Activated CD8-positive, alpha-beta T cell treated with anti-CD3 and anti-CD28 coated beads for 36 hours (primary cell): ENCODE measurements at regions of chr9 and their contacts with region 1.

Region 1: GRCh38 chr9:112898872-112899311 is 8.2 kb upstream of the SLC46A2 start:
- DNase-seq: no peak
- ATAC-seq: no peak
- H3K4me3 Mint-ChIP-seq: no peak overlapping the region
- H3K27ac Mint-ChIP-seq: no peak overlapping the region
- H3K4me1 Mint-ChIP-seq: peaks cover 9% of the 10 kb centered on the region
- H3K27me3 Mint-ChIP-seq: peaks cover 37% of the 10 kb centered on the region
- CTCF ChIP-seq: no peak

Region 2: DNA sequence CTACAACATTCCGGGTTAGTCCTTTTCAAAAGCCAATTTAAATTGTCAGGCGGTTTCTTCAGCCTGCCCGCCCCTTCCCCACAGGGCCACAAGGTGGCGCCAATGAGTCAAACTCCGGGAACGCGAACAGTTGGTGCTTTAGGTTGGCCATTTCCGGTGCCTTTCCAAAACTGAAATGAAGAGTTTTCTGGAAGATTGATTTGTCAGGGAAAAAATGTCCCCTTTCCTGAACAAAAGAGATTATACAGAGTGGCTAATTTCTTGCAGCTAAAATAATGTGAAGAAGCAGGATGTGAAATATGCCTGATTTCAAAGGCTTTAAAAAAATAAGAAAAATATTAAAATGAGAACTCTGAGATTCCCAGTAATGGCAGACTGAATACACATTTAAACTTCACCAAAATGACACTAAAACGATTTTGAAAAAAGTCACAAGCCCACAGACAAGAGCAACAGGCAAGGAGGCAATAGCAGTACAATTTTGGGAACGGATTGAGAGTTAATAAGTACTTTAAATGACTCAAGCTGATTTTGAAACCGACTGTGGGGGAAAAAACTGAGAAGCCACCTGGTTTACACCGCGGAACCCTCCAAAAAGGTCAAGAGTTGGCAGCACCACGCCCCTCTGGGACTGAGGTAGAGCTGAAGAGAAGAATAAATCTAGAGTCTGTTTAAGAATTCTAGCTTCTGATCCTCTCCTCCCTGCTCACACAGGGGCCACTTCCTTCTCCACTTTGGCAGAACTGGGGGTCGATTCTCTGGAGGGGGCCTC is 53.9 kb before region 1 on chr9:
- CTCF ChIA-PET with region 1: interaction called, 89 read pairs
- POLR2A ChIA-PET with region 1: interaction called, 3 read pairs
- intact Hi-C with region 1: loop called (anchors 5 kb)
- DNase-seq: peak; percentile 85
- ATAC-seq: peak; percentile 77
- H3K4me3 Mint-ChIP-seq: no peak overlapping the region
- H3K27ac Mint-ChIP-seq: no peak overlapping the region
- H3K4me1 Mint-ChIP-seq: peaks cover 10% of the 10 kb centered on the region
- H3K27me3 Mint-ChIP-seq: no peaks in the 10 kb centered on the region
- CTCF ChIP-seq: peak; percentile 99

Region 3: DNA sequence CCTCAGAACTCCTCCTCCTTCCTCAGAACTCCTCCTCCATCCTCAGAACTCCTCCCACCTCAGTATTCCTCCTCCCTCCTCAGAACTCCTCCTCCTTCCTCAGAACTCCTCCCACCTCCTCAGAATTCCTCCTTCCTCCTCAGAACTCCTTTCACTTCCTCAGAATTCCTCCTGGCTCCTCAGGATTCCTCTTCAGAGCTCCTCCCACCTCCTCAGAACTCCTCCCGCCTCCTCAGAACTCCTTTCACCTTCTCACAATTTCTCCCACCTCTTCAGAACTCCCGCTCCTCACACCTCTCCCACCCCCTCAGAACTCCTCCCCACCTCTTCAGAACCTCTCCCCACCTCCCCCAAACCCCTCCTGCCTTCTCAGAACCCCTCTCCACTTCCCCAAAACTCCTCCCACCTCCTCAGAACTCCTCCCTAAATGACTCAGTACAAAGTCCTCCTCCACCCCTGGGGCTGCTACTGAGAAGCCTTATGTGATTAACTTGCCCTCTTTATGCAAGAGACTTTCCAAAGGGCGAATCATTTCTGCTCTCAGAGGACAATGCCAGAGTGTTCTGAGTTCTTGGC is 31.4 kb before region 1 on chr9:
- CTCF ChIA-PET with region 1: interaction called, 15 read pairs
- POLR2A ChIA-PET with region 1: no interaction called
- intact Hi-C with region 1: no loop called
- DNase-seq: peak; percentile 57
- ATAC-seq: peak; percentile 88
- H3K4me3 Mint-ChIP-seq: no peak overlapping the region
- H3K27ac Mint-ChIP-seq: no peak overlapping the region
- H3K4me1 Mint-ChIP-seq: peaks cover 19% of the 10 kb centered on the region
- H3K27me3 Mint-ChIP-seq: no peaks in the 10 kb centered on the region
- CTCF ChIP-seq: no peak

Region 4: DNA sequence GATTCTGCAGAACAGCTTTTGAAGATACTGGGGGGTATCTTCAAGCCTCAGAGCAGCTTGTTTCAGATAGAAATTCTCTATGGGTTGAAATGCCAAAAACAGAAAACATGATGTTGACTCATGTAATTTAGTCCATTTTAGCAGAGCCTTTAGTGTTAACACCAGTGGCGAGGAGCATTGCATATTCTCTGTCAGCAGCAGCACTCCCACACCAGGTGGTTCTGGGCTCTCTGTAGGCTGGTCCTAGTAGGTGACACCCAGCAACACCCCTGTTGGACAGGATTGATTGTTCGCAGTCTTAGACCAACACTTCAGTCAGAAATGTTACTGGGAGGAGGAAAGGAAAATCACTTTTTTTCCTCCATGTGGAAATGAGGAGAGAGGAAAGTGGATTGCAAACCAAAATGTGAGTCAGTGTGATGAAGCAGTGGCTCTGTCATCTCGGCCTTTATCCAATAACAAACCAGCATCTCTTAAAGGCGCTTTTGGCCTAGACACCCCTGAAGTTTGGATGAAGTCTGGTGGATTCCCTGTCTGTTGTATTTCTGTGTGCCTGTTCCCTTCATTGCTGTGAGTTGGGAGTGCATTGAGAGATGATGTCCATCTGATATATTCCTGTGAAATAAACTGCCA is 25.0 kb before region 1 on chr9:
- CTCF ChIA-PET with region 1: interaction called, 16 read pairs
- POLR2A ChIA-PET with region 1: no interaction called
- intact Hi-C with region 1: no loop called
- DNase-seq: no peak
- ATAC-seq: no peak
- H3K4me3 Mint-ChIP-seq: no peak overlapping the region
- H3K27ac Mint-ChIP-seq: no peak overlapping the region
- H3K4me1 Mint-ChIP-seq: no peaks in the 10 kb centered on the region
- H3K27me3 Mint-ChIP-seq: no peaks in the 10 kb centered on the region
- CTCF ChIP-seq: no peak

Region 5: GRCh38 chr9:112884101-112884500 is 14.8 kb before region 1 on chr9:
- CTCF ChIA-PET with region 1: interaction called, 19 read pairs
- POLR2A ChIA-PET with region 1: no interaction called
- intact Hi-C with region 1: no loop called
- DNase-seq: no peak
- ATAC-seq: no peak
- H3K4me3 Mint-ChIP-seq: no peak overlapping the region
- H3K27ac Mint-ChIP-seq: no peak overlapping the region
- H3K4me1 Mint-ChIP-seq: no peaks in the 10 kb centered on the region
- H3K27me3 Mint-ChIP-seq: no peaks in the 10 kb centered on the region
- CTCF ChIP-seq: no peak

Region 6: GRCh38 chr9:113187935-113188595 is 289.2 kb after region 1 on chr9:
- CTCF ChIA-PET with region 1: no interaction called
- POLR2A ChIA-PET with region 1: no interaction called
- intact Hi-C with region 1: no loop called
- DNase-seq: no peak
- ATAC-seq: no peak
- H3K4me3 Mint-ChIP-seq: no peak overlapping the region
- H3K27ac Mint-ChIP-seq: no peak overlapping the region
- H3K4me1 Mint-ChIP-seq: no peaks in the 10 kb centered on the region
- H3K27me3 Mint-ChIP-seq: no peaks in the 10 kb centered on the region
- CTCF ChIP-seq: no peak